MCF 10A (cell line): ENCODE measurements at regions of chr16 and their contacts with region 1.

Region 1: DNA sequence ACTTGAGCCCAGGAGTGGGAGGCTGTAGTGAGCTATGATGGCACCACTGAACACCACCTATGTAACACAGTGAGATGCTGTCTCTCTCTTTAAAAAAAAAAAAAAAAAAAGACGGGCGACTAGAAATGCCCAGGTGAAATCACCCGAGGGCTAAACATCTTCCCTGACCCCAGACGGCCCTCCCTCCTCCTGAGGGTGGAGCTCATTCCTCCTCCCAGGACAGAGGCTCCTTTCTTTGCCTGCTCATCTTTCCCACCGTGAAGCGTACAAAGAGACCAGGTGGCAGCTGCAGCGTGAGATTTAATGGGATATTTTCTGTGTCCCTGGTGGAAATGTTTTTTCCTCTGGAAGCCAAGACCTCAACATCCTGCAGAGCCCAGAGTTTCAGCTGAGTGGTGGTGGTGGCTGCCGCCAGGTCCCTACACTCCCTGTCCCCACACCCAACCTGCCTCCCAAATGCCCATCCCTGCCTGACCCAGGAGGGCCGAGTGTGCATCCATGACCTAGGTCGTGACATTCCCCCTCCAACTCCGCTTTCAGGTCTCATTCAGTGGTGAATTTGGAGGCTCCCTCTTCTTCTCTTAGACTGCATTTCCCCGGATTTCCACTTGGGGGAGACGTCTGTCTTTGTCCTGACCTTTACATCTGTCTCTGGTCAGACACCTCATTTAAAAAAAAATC is 14.4 kb upstream of the GPRC5B start:
- DNase-seq: peak; percentile 73
- H3K4me3 Mint-ChIP-seq: no peak overlapping the region
- H3K27ac Mint-ChIP-seq: no peak overlapping the region
- H3K4me1 Mint-ChIP-seq: no peaks in the 10 kb centered on the region
- H3K27me3 Mint-ChIP-seq: no peaks in the 10 kb centered on the region
- CTCF ChIP-seq: peak; percentile 71

Region 2: DNA sequence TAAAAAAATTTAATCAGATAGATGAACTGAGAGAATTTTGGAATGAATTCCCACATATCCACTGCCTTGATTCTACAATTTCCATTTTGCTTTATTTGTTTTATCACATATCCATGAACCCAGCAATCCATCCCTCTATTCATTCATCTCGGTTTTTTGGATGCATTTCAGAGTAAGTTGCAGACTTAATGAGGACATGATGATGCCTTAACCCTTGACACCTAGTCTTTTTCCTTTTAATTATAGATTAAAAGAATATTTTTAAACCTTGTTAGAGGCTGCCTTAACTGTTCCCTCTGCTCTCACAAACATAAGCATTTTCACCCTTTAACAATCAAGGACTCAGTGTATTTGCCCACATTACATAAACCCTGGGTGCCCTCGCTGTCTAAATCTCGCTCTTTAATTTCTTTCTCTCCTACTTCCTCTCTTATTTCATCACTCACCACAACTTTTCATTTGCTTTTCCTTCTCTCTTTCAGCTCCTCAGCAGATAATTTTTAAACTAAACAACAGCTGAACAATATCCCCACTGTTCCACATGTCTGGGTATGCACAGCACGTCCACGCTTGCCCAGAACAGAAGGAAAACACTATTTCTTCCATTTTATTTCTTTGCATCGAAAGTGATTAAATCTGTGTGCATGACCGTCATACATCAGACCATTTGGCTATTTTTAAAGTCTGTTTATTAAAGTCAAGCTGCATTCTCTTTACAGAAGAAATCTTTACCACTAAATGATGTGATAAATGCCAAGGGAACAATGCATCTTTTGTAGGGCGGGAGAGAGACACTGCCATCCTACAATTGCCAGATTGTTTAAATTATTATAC is 141.1 kb before region 1 on chr16:
- CTCF ChIA-PET with region 1: no interaction called
- POLR2A ChIA-PET with region 1: no interaction called
- intact Hi-C with region 1: no loop called
- DNase-seq: no peak
- H3K4me3 Mint-ChIP-seq: no peak overlapping the region
- H3K27ac Mint-ChIP-seq: no peak overlapping the region
- H3K4me1 Mint-ChIP-seq: peaks cover 7% of the 10 kb centered on the region
- H3K27me3 Mint-ChIP-seq: no peaks in the 10 kb centered on the region
- CTCF ChIP-seq: no peak

Region 3: GRCh38 chr16:19912455-19913339 is 13.6 kb after region 1 on chr16:
- CTCF ChIA-PET with region 1: interaction called, 44 read pairs
- POLR2A ChIA-PET with region 1: no interaction called
- intact Hi-C with region 1: no loop called
- DNase-seq: no peak
- H3K4me3 Mint-ChIP-seq: no peak overlapping the region
- H3K27ac Mint-ChIP-seq: no peak overlapping the region
- H3K4me1 Mint-ChIP-seq: no peaks in the 10 kb centered on the region
- H3K27me3 Mint-ChIP-seq: no peaks in the 10 kb centered on the region
- CTCF ChIP-seq: no peak